ENCODE measurements at regions of chr17 and their contacts with region 1.

Region 1: DNA sequence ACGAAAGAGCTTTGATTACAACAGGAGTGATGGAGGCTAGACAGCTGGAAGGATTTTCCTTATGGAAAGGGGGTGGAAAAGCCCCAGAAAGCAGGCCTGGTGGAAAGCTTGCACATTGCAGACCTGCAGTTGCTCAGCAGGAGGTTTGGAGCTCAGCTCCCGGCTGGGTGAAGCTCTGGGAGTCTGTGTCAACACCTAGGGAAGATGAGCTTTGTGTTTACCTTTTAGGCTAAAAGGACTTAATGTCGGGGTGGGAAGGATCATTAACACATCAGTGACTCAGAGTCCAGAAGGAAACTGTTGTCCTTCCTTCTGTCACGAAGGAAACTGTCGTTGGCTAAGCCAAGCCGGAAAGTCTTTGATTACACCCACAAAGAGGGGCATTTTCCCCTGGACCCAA is 48.2 kb downstream of the RAP1GAP2 start:
- DNase-seq: peak; percentile 39
- ATAC-seq: peak; percentile 10
- H3K4me3 Mint-ChIP-seq: no peak overlapping the region
- H3K27ac Mint-ChIP-seq: peak overlapping the region; percentile 73
- H3K4me1 Mint-ChIP-seq: peaks cover 29% of the 10 kb centered on the region
- H3K27me3 Mint-ChIP-seq: no peaks in the 10 kb centered on the region
- CTCF ChIP-seq: no peak

Region 2: DNA sequence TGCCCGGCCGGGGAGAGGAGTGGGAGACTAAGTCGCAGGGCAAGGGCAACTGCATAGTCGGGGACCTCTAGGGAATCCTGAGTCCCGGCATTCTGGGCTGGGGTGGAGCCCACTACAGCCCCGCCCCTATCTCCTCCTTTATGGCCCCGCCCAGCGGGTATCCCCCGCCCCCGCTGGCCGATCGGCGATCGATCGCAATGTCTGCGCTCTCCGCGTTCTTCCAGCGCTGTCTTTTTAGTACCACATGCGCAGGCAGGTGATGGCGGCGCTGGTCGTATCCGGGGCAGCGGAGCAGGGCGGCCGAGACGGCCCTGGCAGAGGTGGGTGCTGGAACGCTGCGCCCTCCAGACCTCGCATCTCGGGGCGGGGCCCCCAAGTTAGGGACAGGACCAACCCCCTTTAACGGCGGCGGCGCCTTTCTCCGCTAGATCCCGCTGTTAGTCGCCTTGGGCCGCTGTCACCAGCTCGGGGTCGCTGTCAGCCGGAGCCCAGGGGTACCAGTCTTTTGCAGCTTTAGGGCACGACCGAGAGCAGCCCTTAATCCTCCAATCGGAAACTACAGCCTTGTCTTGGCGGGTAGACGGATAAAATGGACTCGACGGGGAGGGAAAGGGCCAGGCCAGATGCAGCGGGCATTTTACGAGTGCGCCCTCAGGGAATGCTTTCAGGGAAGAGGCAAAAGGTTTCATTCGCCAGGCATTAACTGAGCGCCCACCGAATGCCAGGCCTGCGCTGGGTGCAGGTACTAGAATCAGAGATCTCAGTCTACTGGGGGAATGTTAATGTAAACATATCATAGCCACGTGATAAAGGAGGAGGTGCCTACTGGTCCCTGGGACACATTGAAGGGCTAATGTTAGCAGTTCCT is 814.3 kb before region 1 on chr17 and contains the start of gene DPH1:
- CTCF ChIA-PET with region 1: no interaction called
- POLR2A ChIA-PET with region 1: no interaction called
- DNase-seq: peak; percentile 95
- ATAC-seq: peak; percentile 88
- H3K4me3 Mint-ChIP-seq: peak within 1 kb of the TSS; percentile 97
- H3K27ac Mint-ChIP-seq: peak within 1 kb of the TSS; percentile 57
- H3K4me1 Mint-ChIP-seq: peaks cover 7% of the 10 kb centered on the region
- H3K27me3 Mint-ChIP-seq: peaks cover 47% of the 10 kb centered on the region
- CTCF ChIP-seq: no peak
- total RNA-seq, gene DPH1: 29.5 to 43.2 TPM (median 33.0 TPM) in 3 replicates

Region 3: DNA sequence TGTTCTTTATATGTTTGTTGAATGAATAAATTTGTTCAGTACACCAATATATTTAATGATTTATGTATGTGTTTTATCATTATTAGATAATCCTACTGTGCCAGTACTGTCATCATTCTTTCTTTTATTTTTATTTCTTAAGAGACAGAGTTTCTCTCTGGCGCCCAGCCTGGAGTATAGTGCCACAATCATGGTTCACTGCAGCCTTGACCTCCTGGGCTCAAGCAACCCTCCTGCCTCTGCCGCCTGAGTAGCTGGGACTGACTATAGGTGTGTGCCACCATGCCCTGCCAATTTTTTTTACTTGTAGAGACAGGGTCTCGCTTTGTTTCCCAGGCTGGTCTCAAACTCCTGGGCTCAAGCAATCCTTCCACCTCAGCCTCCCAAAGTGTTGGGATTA is 209.2 kb before region 1 on chr17:
- CTCF ChIA-PET with region 1: no interaction called
- POLR2A ChIA-PET with region 1: no interaction called
- DNase-seq: no peak
- ATAC-seq: no peak
- H3K4me3 Mint-ChIP-seq: no peak overlapping the region
- H3K27ac Mint-ChIP-seq: no peak overlapping the region
- H3K4me1 Mint-ChIP-seq: peaks cover 43% of the 10 kb centered on the region
- H3K27me3 Mint-ChIP-seq: no peaks in the 10 kb centered on the region
- CTCF ChIP-seq: no peak

Region 4: GRCh38 chr17:2862197-2862596 is 17.8 kb after region 1 on chr17:
- CTCF ChIA-PET with region 1: interaction called, 20 read pairs
- POLR2A ChIA-PET with region 1: interaction called, 4 read pairs
- DNase-seq: no peak
- ATAC-seq: no peak
- H3K4me3 Mint-ChIP-seq: no peak overlapping the region
- H3K27ac Mint-ChIP-seq: no peak overlapping the region; the same call in 1 of the 2 replicates
- H3K4me1 Mint-ChIP-seq: peaks cover 66% of the 10 kb centered on the region
- H3K27me3 Mint-ChIP-seq: no peaks in the 10 kb centered on the region
- CTCF ChIP-seq: no peak

Region 5: DNA sequence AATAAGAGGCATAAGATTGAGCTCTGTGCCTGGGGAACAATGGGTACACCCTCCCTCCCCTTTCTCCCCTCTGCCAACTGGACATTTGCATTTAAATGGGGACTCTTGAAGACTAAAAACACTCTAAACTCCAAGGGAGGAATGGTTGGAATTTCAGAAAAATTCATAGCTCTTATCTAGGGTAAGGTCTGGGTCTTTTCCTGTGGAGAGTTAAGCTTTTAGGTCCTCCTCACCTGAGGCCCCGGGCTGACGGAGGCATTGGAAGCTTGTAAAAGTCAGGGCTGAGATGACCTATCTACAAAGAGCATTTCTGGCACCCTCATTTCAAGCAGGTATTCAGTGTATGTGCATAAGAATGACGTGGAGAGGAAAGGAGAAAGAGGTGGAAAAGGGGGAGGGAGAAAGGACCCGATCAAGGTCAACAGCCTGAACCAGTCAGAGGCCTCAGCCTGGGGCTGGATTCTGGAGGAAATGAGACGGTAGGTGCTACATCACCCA is 29.8 kb after region 1 on chr17:
- CTCF ChIA-PET with region 1: interaction called, 53 read pairs
- POLR2A ChIA-PET with region 1: interaction called, 7 read pairs
- DNase-seq: peak; percentile 61
- ATAC-seq: peak; percentile 73
- H3K4me3 Mint-ChIP-seq: peak overlapping the region; percentile 59
- H3K27ac Mint-ChIP-seq: peak overlapping the region; percentile 100
- H3K4me1 Mint-ChIP-seq: peaks cover 85% of the 10 kb centered on the region
- H3K27me3 Mint-ChIP-seq: no peaks in the 10 kb centered on the region
- CTCF ChIP-seq: no peak

Region 6: GRCh38 chr17:2929881-2930533 is 85.6 kb after region 1 on chr17:
- CTCF ChIA-PET with region 1: interaction called, 114 read pairs
- POLR2A ChIA-PET with region 1: no interaction called
- DNase-seq: peak; percentile 89
- ATAC-seq: peak; percentile 90
- H3K4me3 Mint-ChIP-seq: no peak overlapping the region
- H3K27ac Mint-ChIP-seq: 0 out of 2 replicates have a peak overlapping the region, but pooled peaks have one; percentile 58
- H3K4me1 Mint-ChIP-seq: peaks cover 41% of the 10 kb centered on the region
- H3K27me3 Mint-ChIP-seq: no peaks in the 10 kb centered on the region
- CTCF ChIP-seq: peak; percentile 84

Region 7: GRCh38 chr17:3012926-3013581 is 168.6 kb after region 1 on chr17:
- CTCF ChIA-PET with region 1: interaction called, 73 read pairs
- POLR2A ChIA-PET with region 1: interaction called, 3 read pairs
- DNase-seq: peak; percentile 86
- ATAC-seq: peak; percentile 97
- H3K4me3 Mint-ChIP-seq: no peak overlapping the region
- H3K27ac Mint-ChIP-seq: no peak overlapping the region
- H3K4me1 Mint-ChIP-seq: no peaks in the 10 kb centered on the region
- H3K27me3 Mint-ChIP-seq: no peaks in the 10 kb centered on the region
- CTCF ChIP-seq: peak; percentile 77